ENCODE measurements at regions of chr17 and their contacts with region 1.

Region 1: DNA sequence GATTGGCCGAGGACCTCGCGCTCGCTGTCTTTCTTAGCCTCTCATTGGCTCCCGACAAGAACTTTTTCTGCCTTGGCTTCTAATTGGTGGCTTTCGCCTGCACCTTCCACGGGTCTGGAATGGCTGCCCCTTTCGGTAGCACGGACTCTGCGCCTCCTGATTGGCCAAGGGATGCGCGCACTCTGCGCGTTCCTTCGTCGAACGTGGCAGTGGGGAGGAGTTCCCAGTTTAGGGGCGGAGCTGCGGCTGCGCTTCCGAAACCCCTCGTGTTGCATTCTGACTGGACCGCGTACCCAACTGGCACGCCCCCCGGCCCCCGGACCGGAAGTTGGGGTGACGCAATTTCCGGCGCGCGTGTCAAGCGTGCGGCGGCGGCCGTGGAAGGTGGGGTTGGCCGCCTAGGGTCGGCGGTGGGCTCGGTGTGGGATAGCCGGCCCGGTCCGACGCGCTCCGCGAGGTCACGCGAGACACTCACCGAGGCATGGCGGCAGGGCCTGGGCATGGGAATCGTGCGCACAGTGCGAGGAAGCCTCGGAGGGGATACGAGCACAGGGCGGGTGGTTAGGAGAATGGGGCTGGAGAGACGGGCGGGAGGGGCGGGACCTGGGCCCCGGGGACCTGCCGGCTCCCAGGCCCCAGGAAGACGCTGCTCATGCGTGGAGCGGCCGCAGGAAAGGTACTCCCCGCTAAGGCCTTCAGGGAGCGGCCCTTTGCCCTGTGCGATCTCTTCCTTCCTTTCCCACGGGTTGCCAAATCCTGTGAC is 602 bp upstream of the P4HB start:
- DNase-seq: peak; percentile 100
- H3K4me3 ChIP-seq: peak overlapping the region; percentile 75 to 95 (median 89)
- H3K27ac ChIP-seq: peak overlapping the region; percentile 94 to 99 (median 96)
- H3K4me1 ChIP-seq: peaks cover 0 to 60% (median 35%) of the 10 kb centered on the region in 4 donors
- H3K27me3 ChIP-seq: no peaks in the 10 kb centered on the region
- CTCF ChIP-seq: peak in 1 of 4 experiments; percentile 19
- EP300 ChIP-seq: peak in 2 of 4 donors; percentile 51 to 54
- POLR2A ChIP-seq: peak; percentile 95 to 99

Region 2: GRCh38 chr17:81821603-81822311 is 39.2 kb before region 1 on chr17:
- intact Hi-C with region 1: loop called (anchors 5 kb)
- DNase-seq: peak; percentile 93
- H3K4me3 ChIP-seq: no peak overlapping the region
- H3K27ac ChIP-seq: peak overlapping the region; percentile 83 to 88 (median 86)
- H3K4me1 ChIP-seq: peaks cover 0 to 18% (median 18%) of the 10 kb centered on the region in 4 donors
- H3K27me3 ChIP-seq: peaks cover 0 to 19% (median 9%) of the 10 kb centered on the region in 3 donors
- CTCF ChIP-seq: peak; percentile 17 to 63 (median 50)
- EP300 ChIP-seq: peak in 2 of 4 donors; percentile 16 to 45
- POLR2A ChIP-seq: no peak

Region 3: GRCh38 chr17:82105882-82106687 is 245.1 kb after region 1 on chr17:
- intact Hi-C with region 1: no loop called
- DNase-seq: peak; percentile 73
- H3K4me3 ChIP-seq: peak overlapping the region in 1 of 4 donors; percentile 2
- H3K27ac ChIP-seq: peak overlapping the region; percentile 1 to 54 (median 34)
- H3K4me1 ChIP-seq: peaks cover 0 to 36% (median 34%) of the 10 kb centered on the region in 4 donors
- H3K27me3 ChIP-seq: no peaks in the 10 kb centered on the region
- CTCF ChIP-seq: peak in 1 of 4 experiments; percentile 8
- EP300 ChIP-seq: no peak
- POLR2A ChIP-seq: no peak